ENCODE measurements at regions of chr2 and their contacts with region 1.

Region 1: DNA sequence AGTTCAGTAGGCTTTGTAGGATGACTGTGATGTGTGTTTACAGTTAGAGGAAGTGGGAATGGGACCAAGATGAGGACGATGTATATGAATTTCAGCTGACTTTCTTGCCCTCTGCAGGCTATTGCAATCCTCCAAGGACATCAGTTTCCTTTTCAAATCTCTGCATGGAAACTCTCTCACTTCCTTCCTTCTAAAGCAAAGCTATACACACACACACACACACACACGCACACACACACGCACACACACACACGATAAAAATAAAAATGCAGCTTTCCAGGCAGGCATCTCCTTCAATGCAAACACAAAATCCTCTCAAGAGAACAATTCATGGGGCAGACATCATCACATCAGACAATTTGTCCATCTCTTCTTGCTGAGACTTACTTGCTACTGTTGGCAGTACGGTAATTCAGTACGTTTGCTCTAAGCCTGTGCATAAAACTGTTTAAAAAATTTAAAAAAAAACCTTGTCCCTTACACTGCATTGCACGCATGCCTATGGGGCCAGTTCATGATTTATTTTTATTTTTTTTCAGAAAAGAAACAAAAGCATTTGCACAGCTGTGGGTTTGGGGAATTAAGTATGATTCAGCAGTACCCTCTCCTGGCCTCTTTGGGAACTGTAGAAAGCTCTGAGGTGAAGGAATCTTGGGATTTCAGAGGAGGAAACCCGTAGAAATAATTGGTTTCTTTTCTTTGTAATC is 27.1 kb upstream of the ICOS start:
- DNase-seq: no peak
- ATAC-seq: peak; percentile 28
- H3K4me3 Mint-ChIP-seq: no peak overlapping the region
- H3K27ac Mint-ChIP-seq: no peak overlapping the region
- H3K4me1 Mint-ChIP-seq: peaks cover 12% of the 10 kb centered on the region
- H3K27me3 Mint-ChIP-seq: peaks cover 12% of the 10 kb centered on the region
- CTCF ChIP-seq: no peak

Region 2: GRCh38 chr2:203225423-203226039 is 683.9 kb before region 1 on chr2:
- CTCF ChIA-PET with region 1: interaction called, 6 read pairs
- POLR2A ChIA-PET with region 1: no interaction called
- intact Hi-C with region 1: loop called (anchors 2 kb)
- DNase-seq: no peak
- ATAC-seq: peak; percentile 78
- H3K4me3 Mint-ChIP-seq: no peak overlapping the region
- H3K27ac Mint-ChIP-seq: no peak overlapping the region
- H3K4me1 Mint-ChIP-seq: no peaks in the 10 kb centered on the region
- H3K27me3 Mint-ChIP-seq: no peaks in the 10 kb centered on the region
- CTCF ChIP-seq: peak; percentile 65

Region 3: DNA sequence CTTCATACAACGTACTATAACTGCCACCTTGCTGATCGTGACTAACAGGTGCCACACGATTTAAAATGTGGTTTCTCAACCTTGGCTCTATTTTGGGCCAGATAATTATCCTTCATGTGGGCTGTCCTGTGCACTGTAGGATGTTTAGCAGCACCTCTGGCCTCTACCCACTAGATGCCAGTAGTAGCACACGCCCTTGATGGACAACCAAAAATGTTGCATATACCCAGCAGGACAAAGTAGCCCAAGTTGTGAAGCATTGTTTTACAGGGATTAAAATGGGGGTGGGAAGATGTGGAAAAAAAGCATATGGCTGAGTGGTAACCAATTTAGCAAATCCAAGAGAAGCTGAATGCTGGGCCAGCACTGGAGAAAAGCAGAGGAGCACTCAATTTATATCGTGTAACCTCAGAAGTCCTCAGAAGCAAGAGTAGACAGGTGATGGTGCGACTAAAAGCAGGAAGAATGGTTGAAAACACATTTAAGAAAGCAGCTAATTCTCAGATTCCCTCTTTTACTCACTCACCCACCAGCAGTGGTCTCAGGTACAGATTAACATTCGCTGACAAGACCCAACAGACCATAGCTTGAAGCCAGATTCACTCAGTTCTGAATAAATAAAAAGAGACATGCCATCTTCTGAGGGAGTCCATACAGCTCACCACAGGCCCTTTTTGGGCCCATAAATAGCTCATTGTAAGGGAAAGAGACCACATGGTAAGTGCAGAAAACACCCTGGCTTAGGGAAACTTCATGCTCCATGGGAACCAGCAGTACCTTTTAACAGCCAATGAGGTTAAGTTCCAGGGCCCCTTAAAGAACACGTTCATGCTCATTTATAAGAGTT is 424.9 kb before region 1 on chr2:
- CTCF ChIA-PET with region 1: interaction called, 4 read pairs
- POLR2A ChIA-PET with region 1: no interaction called
- intact Hi-C with region 1: loop called (anchors 1 kb)
- DNase-seq: no peak
- ATAC-seq: no peak
- H3K4me3 Mint-ChIP-seq: no peak overlapping the region
- H3K27ac Mint-ChIP-seq: no peak overlapping the region
- H3K4me1 Mint-ChIP-seq: no peaks in the 10 kb centered on the region
- H3K27me3 Mint-ChIP-seq: peaks cover 1% of the 10 kb centered on the region
- CTCF ChIP-seq: no peak

Region 4: DNA sequence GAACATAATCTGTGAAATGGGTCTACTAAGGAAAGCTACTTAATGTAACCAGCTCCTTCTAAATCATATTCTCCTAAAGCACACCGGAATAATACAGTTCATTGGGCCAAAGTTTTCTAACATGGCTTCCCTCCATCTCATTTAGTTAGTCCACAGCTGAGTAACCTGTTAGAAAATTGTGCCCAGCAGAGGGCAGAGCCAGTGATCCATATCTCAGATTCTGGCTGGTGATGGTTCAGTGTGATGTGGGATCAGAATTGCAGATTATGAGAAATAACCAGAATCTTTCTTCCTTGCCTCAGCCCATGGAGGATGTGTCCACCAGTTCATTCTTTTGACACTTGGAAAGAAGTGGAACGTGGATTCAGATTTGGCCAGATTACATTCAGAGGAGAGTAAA is 51.2 kb before region 1 on chr2:
- CTCF ChIA-PET with region 1: interaction called, 6 read pairs
- POLR2A ChIA-PET with region 1: no interaction called
- intact Hi-C with region 1: loop called (anchors 1 kb)
- DNase-seq: no peak
- ATAC-seq: no peak
- H3K4me3 Mint-ChIP-seq: no peak overlapping the region
- H3K27ac Mint-ChIP-seq: no peak overlapping the region
- H3K4me1 Mint-ChIP-seq: no peaks in the 10 kb centered on the region
- H3K27me3 Mint-ChIP-seq: peaks cover 13% of the 10 kb centered on the region
- CTCF ChIP-seq: no peak